ENCODE measurements at regions of chr4 and their contacts with region 1.

Region 1: GRCh38 chr4:173420324-173420752 is 21.4 kb upstream of the SCRG1 start:
- DNase-seq: no peak
- H3K4me3 ChIP-seq: no peak overlapping the region
- H3K27ac ChIP-seq: no peak overlapping the region
- H3K4me1 ChIP-seq: peaks cover 11% of the 10 kb centered on the region
- H3K27me3 ChIP-seq: no peaks in the 10 kb centered on the region
- CTCF ChIP-seq: peak; percentile 62

Region 2: DNA sequence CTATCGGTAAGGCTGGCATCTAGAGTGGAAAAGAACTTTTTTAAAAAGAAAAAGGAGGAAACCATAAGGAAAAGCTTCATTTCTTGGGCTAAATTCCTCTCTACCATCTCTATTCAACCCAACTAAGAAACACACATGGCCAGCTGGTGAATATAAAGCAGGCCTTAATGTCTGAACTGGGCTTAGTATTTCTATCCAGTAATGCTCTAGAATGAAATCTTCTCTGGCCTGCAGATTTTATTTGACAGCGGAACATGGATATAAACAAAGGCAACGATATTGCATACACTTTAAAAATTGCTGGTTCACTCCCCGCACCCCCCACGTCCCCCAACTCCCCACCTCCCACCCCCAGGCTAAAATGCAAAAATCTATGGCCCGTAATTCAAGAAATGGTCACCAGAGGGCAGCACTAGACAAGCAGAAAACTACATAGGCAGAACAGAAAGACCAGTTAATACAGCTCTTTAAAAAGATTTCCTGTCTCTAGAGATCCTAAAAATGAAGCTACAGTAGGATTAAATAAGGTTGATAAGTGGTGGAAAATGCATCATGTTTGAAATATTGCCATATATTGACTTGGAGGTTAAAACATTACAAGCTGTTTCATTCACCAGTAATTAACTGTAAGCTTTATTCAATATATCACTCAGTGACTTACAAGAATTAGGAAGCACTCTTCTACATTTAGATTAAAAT is 407.0 kb before region 1 on chr4:
- intact Hi-C with region 1: loop called (anchors 10 kb)
- DNase-seq: no peak
- H3K4me3 ChIP-seq: no peak overlapping the region
- H3K27ac ChIP-seq: no peak overlapping the region
- H3K4me1 ChIP-seq: peaks cover 4% of the 10 kb centered on the region
- H3K27me3 ChIP-seq: no peaks in the 10 kb centered on the region
- CTCF ChIP-seq: peak; percentile 79

Region 3: GRCh38 chr4:173301518-173302201 is 118.7 kb before region 1 on chr4:
- intact Hi-C with region 1: no loop called
- DNase-seq: no peak
- H3K4me3 ChIP-seq: no peak overlapping the region
- H3K27ac ChIP-seq: no peak overlapping the region
- H3K4me1 ChIP-seq: no peaks in the 10 kb centered on the region
- H3K27me3 ChIP-seq: no peaks in the 10 kb centered on the region
- CTCF ChIP-seq: peak; percentile 76

Region 4: DNA sequence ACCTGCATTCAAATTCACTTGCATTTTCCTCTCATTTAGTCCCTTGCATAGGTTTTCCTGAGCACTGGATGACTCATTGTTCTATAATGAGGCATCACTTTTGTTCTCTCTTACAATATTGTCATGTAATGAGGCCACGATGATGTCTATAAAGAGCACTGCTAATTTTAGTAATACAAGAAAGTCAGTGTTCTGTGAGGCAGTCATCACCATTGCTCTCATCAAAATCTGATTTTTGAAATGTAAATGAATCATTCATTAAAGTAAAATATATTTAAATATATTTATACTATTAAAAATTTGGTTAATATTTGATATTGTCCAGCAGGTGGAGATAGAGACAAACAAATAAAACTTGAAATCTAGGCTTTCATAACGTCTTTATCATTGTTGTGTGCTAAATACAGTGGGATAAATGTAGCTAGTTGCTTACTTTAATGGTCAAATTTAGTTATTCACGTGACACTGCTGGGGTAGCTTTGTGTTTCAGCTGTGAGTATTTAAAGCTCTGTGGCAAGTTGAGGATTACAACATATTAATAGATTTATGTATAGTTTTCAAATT is 101.6 kb before region 1 on chr4:
- intact Hi-C with region 1: loop called (anchors 2 kb)
- DNase-seq: no peak
- H3K4me3 ChIP-seq: no peak overlapping the region
- H3K27ac ChIP-seq: no peak overlapping the region
- H3K4me1 ChIP-seq: peaks cover 17% of the 10 kb centered on the region
- H3K27me3 ChIP-seq: no peaks in the 10 kb centered on the region
- CTCF ChIP-seq: peak; percentile 63

Region 5: GRCh38 chr4:173494013-173494970 is 74.0 kb after region 1 on chr4:
- intact Hi-C with region 1: loop called (anchors 5 kb)
- DNase-seq: peak; percentile 39
- H3K4me3 ChIP-seq: peak overlapping the region; percentile 63
- H3K27ac ChIP-seq: no peak overlapping the region
- H3K4me1 ChIP-seq: peaks cover 27% of the 10 kb centered on the region
- H3K27me3 ChIP-seq: peaks cover 3% of the 10 kb centered on the region
- CTCF ChIP-seq: peak; percentile 84